CD8-positive, alpha-beta T cell (primary cell): ENCODE measurements at regions of chr10 and their contacts with region 1.

Region 1: GRCh38 chr10:123008439-123009205 is at the starts of genes ACADSB and IKZF5:
- DNase-seq: peak; percentile 92 to 99 (median 96)
- ATAC-seq: peak; percentile 89
- H3K4me3 ChIP-seq: peak within 1 kb of the TSS; percentile 89 to 100
- H3K4me3 Mint-ChIP-seq: peak within 1 kb of the TSS; percentile 97
- H3K27ac ChIP-seq: peak within 1 kb of the TSS; percentile 98 to 99
- H3K27ac Mint-ChIP-seq: peak within 1 kb of the TSS; percentile 99
- H3K4me1 ChIP-seq: peaks cover 48% of the 10 kb centered on the region
- H3K4me1 Mint-ChIP-seq: peaks cover 62% of the 10 kb centered on the region
- H3K27me3 ChIP-seq: no peaks in the 10 kb centered on the region
- H3K27me3 Mint-ChIP-seq: no peaks in the 10 kb centered on the region
- CTCF ChIP-seq: no peak
- total RNA-seq, gene ACADSB: 18.2 to 18.5 TPM
- total RNA-seq, gene IKZF5: 89.5 to 96.1 TPM

Region 2: DNA sequence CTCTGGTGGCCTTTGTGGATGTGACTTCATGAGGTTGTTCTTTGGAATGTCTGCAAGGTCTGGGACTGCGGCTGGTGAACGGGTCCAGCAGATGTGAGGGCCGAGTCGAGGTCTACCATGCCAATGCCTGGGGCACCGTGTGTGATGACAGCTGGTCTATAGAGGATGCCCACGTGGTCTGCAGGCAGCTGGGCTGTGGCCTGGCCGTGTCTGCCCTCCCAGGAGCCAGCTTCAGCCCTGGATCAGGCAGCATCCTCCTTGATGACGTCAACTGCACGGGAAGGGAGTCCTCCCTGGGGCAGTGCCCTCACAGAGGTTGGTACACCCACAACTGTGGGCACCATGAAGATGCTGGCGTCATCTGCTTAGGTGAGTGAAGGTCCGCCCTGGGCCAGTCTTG is 209.9 kb before region 1 on chr10:
- CTCF ChIA-PET with region 1: no interaction called
- POLR2A ChIA-PET with region 1: no interaction called
- intact Hi-C with region 1: no loop called
- DNase-seq: no peak
- ATAC-seq: no peak
- H3K4me3 ChIP-seq: no peak overlapping the region
- H3K4me3 Mint-ChIP-seq: no peak overlapping the region
- H3K27ac ChIP-seq: no peak overlapping the region
- H3K27ac Mint-ChIP-seq: no peak overlapping the region
- H3K4me1 ChIP-seq: no peaks in the 10 kb centered on the region
- H3K4me1 Mint-ChIP-seq: no peaks in the 10 kb centered on the region
- H3K27me3 ChIP-seq: peaks cover 0 to 3% of the 10 kb centered on the region in 2 experiments
- H3K27me3 Mint-ChIP-seq: peaks cover 20% of the 10 kb centered on the region
- CTCF ChIP-seq: no peak

Region 3: GRCh38 chr10:122968698-122969097 is 39.9 kb before region 1 on chr10:
- CTCF ChIA-PET with region 1: no interaction called
- POLR2A ChIA-PET with region 1: no interaction called
- intact Hi-C with region 1: no loop called
- DNase-seq: no peak
- ATAC-seq: no peak
- H3K4me3 ChIP-seq: no peak overlapping the region
- H3K4me3 Mint-ChIP-seq: no peak overlapping the region
- H3K27ac ChIP-seq: no peak overlapping the region
- H3K27ac Mint-ChIP-seq: no peak overlapping the region
- H3K4me1 ChIP-seq: no peaks in the 10 kb centered on the region
- H3K4me1 Mint-ChIP-seq: no peaks in the 10 kb centered on the region
- H3K27me3 ChIP-seq: no peaks in the 10 kb centered on the region
- H3K27me3 Mint-ChIP-seq: peaks cover 12% of the 10 kb centered on the region
- CTCF ChIP-seq: no peak

Region 4: DNA sequence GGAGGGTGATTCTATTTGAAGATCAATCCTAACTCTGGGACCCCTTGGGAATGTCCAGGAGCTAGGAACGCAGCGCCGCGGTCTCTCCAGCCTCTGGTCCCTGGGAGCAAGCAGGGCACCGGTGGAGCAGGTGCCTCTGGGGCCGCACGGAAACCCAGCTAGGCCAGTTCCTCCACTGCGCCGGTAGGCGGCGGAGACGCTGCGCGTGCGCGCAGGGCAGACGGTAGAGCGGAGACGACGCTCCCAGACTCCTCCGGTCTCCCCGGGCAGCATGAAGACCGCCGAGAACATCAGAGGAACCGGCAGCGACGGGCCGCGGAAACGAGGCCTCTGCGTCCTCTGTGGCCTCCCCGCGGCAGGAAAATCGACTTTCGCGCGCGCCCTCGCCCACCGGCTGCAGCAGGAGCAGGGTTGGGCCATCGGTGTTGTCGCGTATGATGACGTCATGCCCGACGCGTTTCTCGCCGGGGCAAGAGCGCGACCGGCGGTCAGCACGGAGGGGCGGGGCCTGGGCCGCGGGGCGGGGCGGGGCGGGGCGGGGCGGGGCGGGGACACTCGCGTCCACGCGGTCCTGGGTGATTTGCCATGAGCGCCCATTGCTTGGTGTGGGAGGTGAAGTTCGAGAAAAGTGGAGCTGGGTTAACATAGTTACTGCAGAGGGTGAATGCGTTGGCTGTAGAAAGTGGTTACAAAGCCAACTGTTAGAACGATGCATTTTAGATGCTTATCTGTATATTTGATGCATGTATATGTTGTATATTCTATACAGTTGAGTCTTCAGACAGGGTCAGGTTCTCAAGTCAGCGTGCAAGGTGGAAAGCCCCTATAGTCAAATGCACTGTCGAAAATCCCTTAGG is 28.2 kb before region 1 on chr10 and contains the start of gene PSTK:
- CTCF ChIA-PET with region 1: interaction called, 7 read pairs
- POLR2A ChIA-PET with region 1: interaction called, 31 read pairs
- intact Hi-C with region 1: loop called (anchors 1 kb)
- DNase-seq: peak; percentile 78 to 96 (median 86)
- ATAC-seq: peak; percentile 96
- H3K4me3 ChIP-seq: peak within 1 kb of the TSS; percentile 86 to 93
- H3K4me3 Mint-ChIP-seq: peak within 1 kb of the TSS; percentile 95
- H3K27ac ChIP-seq: peak within 1 kb of the TSS; percentile 96 to 97
- H3K27ac Mint-ChIP-seq: peak within 1 kb of the TSS; percentile 98
- H3K4me1 ChIP-seq: peaks cover 12% of the 10 kb centered on the region
- H3K4me1 Mint-ChIP-seq: peaks cover 19% of the 10 kb centered on the region
- H3K27me3 ChIP-seq: no peaks in the 10 kb centered on the region
- H3K27me3 Mint-ChIP-seq: peaks cover 4% of the 10 kb centered on the region
- CTCF ChIP-seq: peak; percentile 91
- total RNA-seq, gene PSTK: 20.5 to 20.9 TPM

Region 5: DNA sequence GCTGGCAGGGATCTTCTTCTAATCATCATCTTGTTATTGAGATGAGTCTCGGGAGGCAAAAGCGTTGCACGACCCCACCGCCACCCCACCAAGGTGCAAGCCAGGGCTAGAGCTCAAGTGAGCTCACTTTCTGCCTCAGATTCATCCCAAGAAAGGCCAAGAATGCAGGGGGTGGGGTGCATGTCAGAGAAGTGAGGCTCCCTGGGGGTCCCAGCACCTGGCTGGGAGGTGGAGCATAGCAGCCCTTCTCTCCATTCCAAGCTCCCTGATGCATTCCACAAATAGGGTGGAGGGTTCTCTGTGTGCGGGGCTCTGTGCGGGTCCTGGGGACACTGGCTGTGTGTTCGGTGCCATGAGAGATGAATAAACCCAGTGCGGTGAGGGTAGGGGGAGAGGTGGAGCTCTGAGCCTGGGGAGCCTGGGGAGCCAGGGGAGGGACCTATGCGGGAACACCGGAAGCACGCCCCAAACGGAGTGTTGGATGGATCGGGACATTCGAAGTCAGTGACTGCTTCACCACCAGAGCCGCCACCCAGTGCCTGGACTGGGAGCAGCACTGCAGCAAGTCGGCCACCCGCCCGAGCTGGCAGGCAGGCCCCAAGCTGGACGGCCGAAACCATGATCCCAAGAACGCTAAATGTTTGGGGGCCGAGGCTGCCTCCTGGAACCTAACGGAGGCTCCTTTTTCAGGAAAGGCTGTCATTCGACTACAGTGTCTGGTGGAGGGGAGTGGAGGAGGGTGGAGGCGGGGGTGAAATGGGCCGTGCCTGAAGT is 109.2 kb after region 1 on chr10:
- CTCF ChIA-PET with region 1: no interaction called
- POLR2A ChIA-PET with region 1: no interaction called
- intact Hi-C with region 1: no loop called
- DNase-seq: no peak
- ATAC-seq: no peak
- H3K4me3 ChIP-seq: no peak overlapping the region
- H3K4me3 Mint-ChIP-seq: no peak overlapping the region
- H3K27ac ChIP-seq: no peak overlapping the region
- H3K27ac Mint-ChIP-seq: no peak overlapping the region
- H3K4me1 ChIP-seq: no peaks in the 10 kb centered on the region
- H3K4me1 Mint-ChIP-seq: no peaks in the 10 kb centered on the region
- H3K27me3 ChIP-seq: peaks cover 0 to 8% of the 10 kb centered on the region in 2 experiments
- H3K27me3 Mint-ChIP-seq: peaks cover 31% of the 10 kb centered on the region
- CTCF ChIP-seq: no peak

Region 6: DNA sequence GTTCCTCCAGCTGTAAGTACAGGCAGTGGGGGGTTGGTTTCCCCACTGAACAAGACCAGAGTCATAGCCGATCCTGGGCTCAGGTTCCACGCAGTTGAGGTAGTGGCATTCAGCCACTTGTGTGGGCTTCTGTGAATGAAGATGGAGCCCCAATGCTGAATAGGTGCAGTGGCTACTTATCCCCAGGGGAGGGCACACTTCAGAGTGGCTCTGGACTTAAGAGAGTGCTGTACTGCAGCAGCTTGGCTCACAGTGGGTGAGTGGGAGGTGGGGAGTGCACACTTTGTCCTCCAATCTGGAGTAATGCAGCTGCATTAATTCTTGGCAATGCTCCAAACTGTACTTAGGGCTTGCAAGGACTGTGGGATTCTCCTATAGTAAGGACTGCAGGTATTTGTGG is 227.5 kb after region 1 on chr10:
- CTCF ChIA-PET with region 1: no interaction called
- POLR2A ChIA-PET with region 1: interaction called, 3 read pairs
- intact Hi-C with region 1: loop called (anchors 10 kb)
- DNase-seq: no peak
- ATAC-seq: no peak
- H3K4me3 ChIP-seq: no peak overlapping the region
- H3K4me3 Mint-ChIP-seq: no peak overlapping the region
- H3K27ac ChIP-seq: no peak overlapping the region
- H3K27ac Mint-ChIP-seq: no peak overlapping the region
- H3K4me1 ChIP-seq: peaks cover 7% of the 10 kb centered on the region
- H3K4me1 Mint-ChIP-seq: peaks cover 11% of the 10 kb centered on the region
- H3K27me3 ChIP-seq: no peaks in the 10 kb centered on the region
- H3K27me3 Mint-ChIP-seq: no peaks in the 10 kb centered on the region
- CTCF ChIP-seq: no peak

Region 7: GRCh38 chr10:124461438-124462347 is 1453.1 kb after region 1 on chr10 and contains the start of gene LHPP:
- CTCF ChIA-PET with region 1: no interaction called
- POLR2A ChIA-PET with region 1: no interaction called
- intact Hi-C with region 1: loop called (anchors 10 kb)
- DNase-seq: peak; percentile 72 to 93 (median 86)
- ATAC-seq: peak; percentile 94
- H3K4me3 ChIP-seq: peak within 1 kb of the TSS; percentile 61 to 90
- H3K4me3 Mint-ChIP-seq: peak within 1 kb of the TSS; percentile 91
- H3K27ac ChIP-seq: peak within 1 kb of the TSS; percentile 37 to 79
- H3K27ac Mint-ChIP-seq: peak within 1 kb of the TSS; percentile 95
- H3K4me1 ChIP-seq: peaks cover 25% of the 10 kb centered on the region
- H3K4me1 Mint-ChIP-seq: peaks cover 32% of the 10 kb centered on the region
- H3K27me3 ChIP-seq: peaks cover 0 to under 1% of the 10 kb centered on the region in 2 experiments
- H3K27me3 Mint-ChIP-seq: peaks cover 4% of the 10 kb centered on the region
- CTCF ChIP-seq: peak; percentile 39
- total RNA-seq, gene LHPP: 14.4 to 17.3 TPM